RWPE1 (cell line): ENCODE measurements at regions of chr6 and their contacts with region 1.

Region 1: GRCh38 chr6:56595490-56596122 is 47.1 kb downstream of the DST start:
- DNase-seq: peak; percentile 35
- H3K27ac ChIP-seq: no peak overlapping the region
- CTCF ChIP-seq: peak; percentile 75

Region 2: GRCh38 chr6:56314683-56315523 is 280.7 kb before region 1 on chr6:
- CTCF ChIA-PET with region 1: interaction called, 10 read pairs
- POLR2A ChIA-PET with region 1: no interaction called
- DNase-seq: peak; percentile 42
- H3K27ac ChIP-seq: no peak overlapping the region
- CTCF ChIP-seq: peak; percentile 80

Region 3: DNA sequence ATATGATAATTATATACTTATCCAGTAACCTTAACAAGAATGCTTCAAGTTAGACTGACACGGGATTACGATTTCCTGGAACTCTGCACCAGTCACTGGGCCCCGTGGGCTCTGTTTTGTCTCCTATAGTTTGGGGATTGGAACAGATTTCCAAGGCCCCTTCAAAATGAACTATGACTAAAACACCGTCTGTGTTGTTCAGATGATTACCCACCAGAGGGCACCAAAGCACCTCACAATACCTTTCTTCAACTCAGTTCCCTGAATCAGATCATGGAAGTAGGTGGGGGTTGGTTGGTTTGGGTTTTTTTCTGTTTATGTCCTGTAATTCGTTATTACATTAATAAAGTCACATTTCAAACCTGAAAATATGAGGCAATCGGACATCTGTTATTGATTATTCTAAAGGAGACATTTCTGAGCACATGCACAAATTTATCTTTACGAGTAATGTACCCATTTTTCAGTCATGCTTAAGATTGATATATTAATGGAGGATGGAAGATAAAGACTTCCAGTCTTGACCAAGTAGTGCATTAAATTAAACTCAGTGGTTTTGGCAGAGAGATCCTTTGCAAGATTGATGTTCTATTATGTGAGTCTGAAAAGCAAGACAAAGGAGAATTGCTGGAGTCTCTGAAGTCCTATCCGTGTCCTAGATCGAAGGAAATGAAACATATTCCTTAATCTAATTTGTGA is 236.3 kb before region 1 on chr6:
- CTCF ChIA-PET with region 1: interaction called, 10 read pairs
- POLR2A ChIA-PET with region 1: no interaction called
- DNase-seq: peak; percentile 78
- H3K27ac ChIP-seq: no peak overlapping the region
- CTCF ChIP-seq: peak; percentile 80

Region 4: GRCh38 chr6:56370561-56371211 is 224.9 kb before region 1 on chr6:
- CTCF ChIA-PET with region 1: interaction called, 16 read pairs
- POLR2A ChIA-PET with region 1: no interaction called
- DNase-seq: peak; percentile 75
- H3K27ac ChIP-seq: peak overlapping the region; percentile 90
- CTCF ChIP-seq: no peak

Region 5: DNA sequence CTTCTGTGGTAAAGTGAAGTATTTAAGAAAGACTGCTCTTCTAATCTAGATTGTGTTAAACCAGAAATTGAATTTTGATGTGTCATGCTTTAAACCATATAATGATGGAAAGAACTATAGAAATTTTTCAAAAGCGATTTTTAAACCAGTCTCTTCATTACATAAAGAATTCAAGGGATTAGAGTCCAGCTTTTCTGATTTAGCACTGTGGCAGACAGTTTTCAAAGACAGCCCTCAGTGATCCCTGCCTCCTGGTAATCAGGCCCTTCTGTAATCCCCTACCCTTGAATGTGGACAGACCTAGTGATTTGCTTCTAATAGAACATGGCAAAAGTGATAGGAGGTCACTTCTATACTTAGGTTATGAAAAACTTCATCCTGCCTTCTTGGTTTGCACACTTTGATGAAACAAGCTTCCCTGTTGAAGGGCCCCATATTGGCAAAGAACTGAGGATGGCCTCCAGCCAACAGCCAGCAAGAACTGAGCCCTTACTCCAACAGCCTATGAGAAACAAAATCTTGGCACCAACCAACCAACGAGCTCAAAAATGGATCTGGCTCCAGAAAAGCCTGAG is 144.4 kb before region 1 on chr6:
- CTCF ChIA-PET with region 1: no interaction called
- POLR2A ChIA-PET with region 1: no interaction called
- DNase-seq: no peak
- H3K27ac ChIP-seq: no peak overlapping the region
- CTCF ChIP-seq: no peak

Region 6: GRCh38 chr6:56575736-56576135 is 19.9 kb before region 1 on chr6:
- CTCF ChIA-PET with region 1: interaction called, 11 read pairs
- POLR2A ChIA-PET with region 1: no interaction called
- DNase-seq: no peak
- H3K27ac ChIP-seq: no peak overlapping the region
- CTCF ChIP-seq: no peak